Head of caudate nucleus (tissue), 42 donors: ENCODE measurements at regions of chr3 and their contacts with region 1.

Region 1: DNA sequence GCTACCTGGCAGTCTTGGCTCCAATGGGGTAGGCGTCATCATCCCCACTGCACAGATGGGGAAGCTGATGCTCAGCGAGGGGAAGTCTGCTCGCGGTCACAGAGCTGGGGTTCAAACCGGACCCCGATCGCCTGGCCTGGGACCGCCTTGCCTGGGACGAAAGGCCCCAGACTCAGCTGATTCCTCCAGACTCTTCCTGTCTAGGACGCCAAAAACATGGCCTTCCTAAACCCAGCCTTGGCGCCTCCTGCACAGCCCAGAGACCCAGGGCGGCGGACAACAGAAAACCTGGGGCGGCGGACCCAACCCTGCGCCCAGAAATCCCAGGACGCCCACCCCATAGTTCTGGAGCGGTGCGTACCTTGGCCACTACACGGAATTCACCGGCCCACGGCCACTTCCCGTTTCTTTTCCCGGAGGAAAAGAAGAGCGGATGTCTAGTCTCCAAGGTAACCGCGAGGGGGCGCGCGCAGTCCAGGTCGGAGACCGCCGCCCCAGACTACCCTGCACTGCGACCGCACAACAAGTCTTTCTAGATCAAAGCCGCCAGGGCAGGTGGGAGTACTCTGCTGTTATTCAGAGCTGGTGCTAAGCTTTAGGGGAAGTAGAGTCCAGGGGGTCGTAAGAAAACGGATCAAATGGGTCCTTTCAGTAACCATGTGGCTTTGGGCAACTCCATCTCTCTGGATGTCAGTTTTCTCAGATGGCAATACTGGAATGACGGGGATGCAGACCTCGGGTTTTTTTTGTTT is 4.9 kb upstream of the IL17RD start:
- DNase-seq: peak; percentile 36 to 91 (median 81)

Region 2: DNA sequence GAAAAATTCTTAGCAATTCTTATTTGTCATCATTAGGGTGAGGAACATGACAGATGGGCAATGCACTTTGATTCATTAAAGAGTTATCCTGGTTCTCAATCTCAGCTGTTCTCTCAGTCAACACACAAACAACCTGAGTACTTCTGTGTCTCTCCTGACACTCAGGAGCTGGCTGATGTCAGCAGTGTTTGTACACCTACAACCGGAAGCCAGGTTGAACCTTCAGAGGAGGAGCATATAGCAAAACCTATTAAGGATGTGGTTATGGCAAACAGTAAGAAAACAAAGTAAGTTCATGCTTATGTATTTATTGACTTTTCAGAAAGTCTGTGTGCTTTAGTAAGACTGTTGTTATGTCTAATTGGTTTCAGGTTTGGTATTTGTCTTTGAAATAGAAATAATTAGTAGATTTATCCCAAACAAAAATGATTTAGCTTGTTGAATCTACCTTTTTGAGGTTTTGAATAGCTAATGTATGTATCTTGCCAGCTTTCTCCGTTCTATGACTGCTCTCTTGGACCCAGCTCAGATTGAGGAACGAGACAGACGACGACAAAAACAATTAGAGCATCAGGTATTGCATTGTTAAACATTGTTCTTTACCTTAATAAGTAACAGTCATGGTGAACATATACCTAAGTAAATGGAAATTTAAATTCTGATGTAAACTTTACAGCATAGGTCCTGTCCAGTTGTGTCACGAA is 576.4 kb before region 1 on chr3:
- intact Hi-C with region 1: no loop called
- DNase-seq: no peak

Region 3: DNA sequence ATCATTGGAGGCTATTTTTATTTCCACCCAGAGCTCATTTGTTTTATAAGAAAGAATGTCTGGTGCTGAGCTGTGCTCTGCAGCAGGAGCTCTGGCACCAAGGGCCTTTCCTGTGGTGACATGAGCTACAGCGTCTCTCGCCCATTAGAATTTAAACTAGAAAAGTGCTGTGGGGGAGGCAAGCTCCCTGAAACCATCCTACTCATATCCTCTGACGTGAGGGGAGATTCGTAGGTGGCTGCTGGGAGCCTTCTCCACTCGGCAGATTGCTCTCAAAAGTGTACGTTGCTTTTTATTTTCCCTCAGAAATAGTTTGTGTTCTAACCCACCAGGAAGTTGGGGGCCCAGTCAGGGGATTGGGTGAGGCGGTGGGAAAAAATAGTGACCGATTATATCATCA is 292.0 kb before region 1 on chr3:
- intact Hi-C with region 1: no loop called
- DNase-seq: peak in 40 of 42 donors; percentile 17 to 88 (median 54)

Region 4: GRCh38 chr3:56997675-56998074 is 172.4 kb before region 1 on chr3:
- intact Hi-C with region 1: loop called (anchors 10 kb)
- DNase-seq: no peak

Region 5: DNA sequence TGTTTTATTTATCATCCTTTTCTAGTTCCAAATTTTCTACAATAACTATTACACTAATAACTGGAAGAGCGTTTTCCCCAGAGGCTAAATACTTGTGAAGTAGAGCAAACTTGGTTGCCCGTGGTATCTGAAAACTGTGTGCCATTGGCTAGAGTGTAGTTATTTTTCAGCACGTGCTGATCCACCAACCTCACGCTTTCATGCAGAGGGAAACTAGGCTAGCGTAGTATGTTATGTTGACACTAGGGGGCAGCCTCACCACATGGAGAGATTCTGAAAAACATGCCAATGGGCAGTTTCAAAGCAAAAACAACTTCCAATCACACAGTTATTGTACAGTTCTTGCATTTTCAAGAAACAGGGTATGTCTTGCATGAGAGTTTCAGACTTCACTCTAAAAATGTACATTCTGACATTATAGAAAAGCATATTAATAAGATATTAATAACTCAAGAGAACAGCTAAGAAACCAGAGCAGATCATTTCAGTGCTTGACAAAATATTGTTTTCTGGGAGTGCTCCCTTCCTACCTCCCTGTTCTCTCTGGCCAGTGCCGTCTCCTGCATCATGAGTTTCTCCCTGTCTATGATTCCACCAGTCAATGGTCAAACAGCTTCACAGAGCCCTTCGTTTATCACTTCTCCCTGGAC is 69.9 kb before region 1 on chr3:
- intact Hi-C with region 1: loop called (anchors 5 kb)
- DNase-seq: peak in 41 of 42 donors; percentile 32 to 93 (median 79)

Region 6: GRCh38 chr3:57227204-57227929 is 57.3 kb after region 1 on chr3 and contains the start of gene APPL1:
- intact Hi-C with region 1: loop called (anchors 5 kb)
- DNase-seq: peak; percentile 74 to 98 (median 95)